CD4-positive, alpha-beta memory T cell (primary cell): ENCODE measurements at regions of chr22 and their contacts with region 1.

Region 1: DNA sequence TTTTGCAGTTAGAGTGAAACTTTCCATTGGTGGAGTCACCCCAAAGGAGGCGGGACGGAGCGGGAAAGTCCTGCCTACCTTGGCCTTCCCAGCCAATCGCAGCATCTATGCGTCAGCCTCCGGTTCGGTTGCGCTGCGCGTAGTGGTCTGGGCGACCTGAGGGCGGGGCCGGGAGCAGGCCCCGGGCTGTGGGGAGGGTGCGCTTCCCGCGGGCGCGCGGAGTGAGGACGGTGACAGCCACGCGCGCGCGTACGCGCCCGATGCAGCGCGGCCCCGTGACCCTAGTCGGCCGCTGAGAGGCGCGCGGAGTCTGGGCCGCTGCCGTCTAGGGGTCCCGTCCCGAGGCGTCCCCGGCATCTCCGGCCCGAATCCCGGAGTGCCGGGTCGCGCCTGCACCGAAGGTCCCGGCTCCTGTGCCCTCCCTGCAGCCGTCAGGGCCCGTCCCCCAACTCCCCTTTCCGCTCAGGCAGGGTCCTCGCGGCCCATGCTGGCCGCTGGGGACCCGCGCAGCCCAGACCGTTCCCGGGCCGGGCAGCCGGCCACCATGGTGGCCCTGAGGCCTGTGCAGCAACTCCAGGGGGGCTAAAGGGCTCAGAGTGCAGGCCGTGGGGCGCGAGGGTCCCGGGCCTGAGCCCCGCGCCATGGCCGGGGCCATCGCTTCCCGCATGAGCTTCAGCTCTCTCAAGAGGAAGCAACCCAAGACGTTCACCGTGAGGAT is at the start of gene NF2:
- DNase-seq: peak; percentile 98 to 99 (median 99)
- H3K4me3 ChIP-seq: peak within 1 kb of the TSS; percentile 79 to 88
- H3K4me3 Mint-ChIP-seq: peak within 1 kb of the TSS; percentile 90 to 99 (median 96)
- H3K27ac ChIP-seq: peak within 1 kb of the TSS; percentile 88
- H3K27ac Mint-ChIP-seq: peak within 1 kb of the TSS; percentile 80 to 98 (median 97)
- H3K4me1 ChIP-seq: peaks cover 21% of the 10 kb centered on the region
- H3K4me1 Mint-ChIP-seq: peaks cover 11 to 39% (median 21%) of the 10 kb centered on the region in 4 donors
- H3K27me3 ChIP-seq: no peaks in the 10 kb centered on the region
- H3K27me3 Mint-ChIP-seq: no peaks in the 10 kb centered on the region
- total RNA-seq, gene NF2: 28.3 to 31.4 TPM

Region 2: GRCh38 chr22:29443452-29443851 is 160.1 kb before region 1 on chr22:
- CTCF ChIA-PET with region 1: no interaction called
- POLR2A ChIA-PET with region 1: no interaction called
- intact Hi-C with region 1: no loop called
- DNase-seq: no peak
- H3K4me3 ChIP-seq: no peak overlapping the region
- H3K4me3 Mint-ChIP-seq: no peak overlapping the region
- H3K27ac ChIP-seq: no peak overlapping the region
- H3K27ac Mint-ChIP-seq: no peak overlapping the region
- H3K4me1 ChIP-seq: no peaks in the 10 kb centered on the region
- H3K4me1 Mint-ChIP-seq: no peaks in the 10 kb centered on the region
- H3K27me3 ChIP-seq: no peaks in the 10 kb centered on the region
- H3K27me3 Mint-ChIP-seq: peaks cover 4% of the 10 kb centered on the region in 2 donors

Region 3: DNA sequence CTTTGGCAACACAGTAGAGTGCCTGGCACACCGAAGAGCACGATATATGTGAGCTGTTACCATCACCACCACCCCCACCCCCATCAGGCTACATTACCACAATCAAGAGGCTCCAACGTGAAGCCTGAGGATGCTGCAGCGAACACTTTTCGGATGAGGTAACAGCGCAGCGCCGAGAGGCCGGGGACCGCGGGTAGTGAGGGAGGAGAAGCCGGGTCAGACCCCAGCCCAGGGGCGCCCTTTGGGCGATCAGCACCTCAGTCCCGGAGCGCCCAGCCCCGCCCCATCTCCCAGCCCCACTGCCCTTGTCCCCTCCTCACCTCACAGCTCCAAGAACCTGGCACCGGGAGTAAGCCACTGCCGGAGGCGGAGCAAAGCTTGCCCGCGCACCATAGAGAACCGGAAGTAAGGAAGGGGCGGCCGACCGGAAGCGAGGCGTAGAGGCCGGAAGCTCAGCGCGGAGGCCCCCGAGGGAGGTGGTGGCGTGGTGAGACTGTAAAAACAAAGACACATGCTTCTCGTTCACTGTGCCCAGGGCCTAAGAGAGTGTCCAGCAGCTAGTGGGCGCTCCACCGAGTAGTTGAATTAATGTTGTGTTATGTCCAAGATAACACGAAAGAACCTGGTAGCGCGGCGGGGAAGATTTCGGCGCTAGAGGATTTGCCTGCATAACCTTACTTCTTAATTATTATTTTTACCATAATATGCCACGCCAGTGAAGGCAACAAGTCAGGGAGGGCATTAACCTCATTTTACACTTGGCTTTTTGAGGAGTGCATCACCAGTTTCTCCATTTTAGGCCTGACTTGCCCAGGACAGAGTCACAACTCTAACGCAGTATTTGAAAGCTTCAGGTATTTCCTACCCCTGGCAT is 49.9 kb before region 1 on chr22 and contains the start of gene THOC5:
- CTCF ChIA-PET with region 1: interaction called, 3 read pairs
- POLR2A ChIA-PET with region 1: interaction called, 24 read pairs
- intact Hi-C with region 1: loop called (anchors 1 kb)
- DNase-seq: peak; percentile 86 to 91 (median 87)
- H3K4me3 ChIP-seq: peak within 1 kb of the TSS; percentile 69 to 95
- H3K4me3 Mint-ChIP-seq: peak within 1 kb of the TSS; percentile 92 to 99 (median 97)
- H3K27ac ChIP-seq: peak within 1 kb of the TSS; percentile 65
- H3K27ac Mint-ChIP-seq: peak within 1 kb of the TSS; percentile 87 to 99 (median 98)
- H3K4me1 ChIP-seq: peaks cover 8% of the 10 kb centered on the region
- H3K4me1 Mint-ChIP-seq: peaks cover 14 to 40% (median 27%) of the 10 kb centered on the region in 4 donors
- H3K27me3 ChIP-seq: no peaks in the 10 kb centered on the region
- H3K27me3 Mint-ChIP-seq: no peaks in the 10 kb centered on the region
- total RNA-seq, gene THOC5: 57.6 to 57.7 TPM

Region 4: GRCh38 chr22:29587938-29588699 is 15.4 kb before region 1 on chr22:
- CTCF ChIA-PET with region 1: interaction called, 19 read pairs
- POLR2A ChIA-PET with region 1: interaction called, 6 read pairs
- intact Hi-C with region 1: loop called (anchors 1 kb)
- DNase-seq: no peak
- H3K4me3 ChIP-seq: no peak overlapping the region
- H3K4me3 Mint-ChIP-seq: no peak overlapping the region
- H3K27ac ChIP-seq: no peak overlapping the region
- H3K27ac Mint-ChIP-seq: peak overlapping the region in 3 of 7 donors; percentile 18 to 60 (median 46)
- H3K4me1 ChIP-seq: peaks cover 8% of the 10 kb centered on the region
- H3K4me1 Mint-ChIP-seq: peaks cover 8 to 12% (median 10%) of the 10 kb centered on the region in 4 donors
- H3K27me3 ChIP-seq: no peaks in the 10 kb centered on the region
- H3K27me3 Mint-ChIP-seq: no peaks in the 10 kb centered on the region

Region 5: DNA sequence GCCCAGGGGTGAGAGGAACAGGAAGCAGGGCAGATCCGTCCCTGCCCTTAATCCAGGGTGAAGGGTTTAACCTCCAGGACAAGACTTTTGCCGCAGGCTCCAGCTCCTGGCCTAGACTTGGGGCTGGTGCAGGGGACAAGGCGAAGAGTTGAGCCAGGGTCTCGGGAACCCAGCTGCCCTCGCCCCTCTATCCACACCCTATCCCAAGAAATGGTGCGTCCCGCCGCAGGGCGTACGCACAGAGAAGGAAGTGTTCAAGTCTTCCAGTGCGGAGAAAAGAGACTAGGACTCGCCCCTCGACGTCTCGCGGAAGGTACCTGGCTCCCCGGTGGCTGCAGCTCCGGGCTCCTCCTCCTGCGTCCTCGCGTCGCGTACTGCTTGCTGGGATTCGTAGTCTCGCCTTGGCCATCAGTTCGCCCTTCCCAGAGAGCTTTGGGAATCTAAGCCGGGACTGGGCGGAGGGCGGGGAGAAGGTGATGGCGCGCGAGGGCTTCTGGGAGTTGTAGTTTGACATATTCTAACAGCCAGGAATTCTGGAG is 163.2 kb after region 1 on chr22 and contains the start of gene ZMAT5:
- CTCF ChIA-PET with region 1: no interaction called
- POLR2A ChIA-PET with region 1: interaction called, 4 read pairs
- intact Hi-C with region 1: loop called (anchors 1 kb)
- DNase-seq: peak; percentile 93 to 96 (median 95)
- H3K4me3 ChIP-seq: peak within 1 kb of the TSS; percentile 96 to 100
- H3K4me3 Mint-ChIP-seq: peak within 1 kb of the TSS; percentile 95 to 100 (median 99)
- H3K27ac ChIP-seq: peak within 1 kb of the TSS; percentile 87
- H3K27ac Mint-ChIP-seq: peak within 1 kb of the TSS; percentile 38 to 99 (median 99)
- H3K4me1 ChIP-seq: peaks cover 29% of the 10 kb centered on the region
- H3K4me1 Mint-ChIP-seq: peaks cover 22 to 53% (median 28%) of the 10 kb centered on the region in 4 donors
- H3K27me3 ChIP-seq: no peaks in the 10 kb centered on the region
- H3K27me3 Mint-ChIP-seq: no peaks in the 10 kb centered on the region
- total RNA-seq, gene ZMAT5: 16.3 to 20.4 TPM

Region 6: DNA sequence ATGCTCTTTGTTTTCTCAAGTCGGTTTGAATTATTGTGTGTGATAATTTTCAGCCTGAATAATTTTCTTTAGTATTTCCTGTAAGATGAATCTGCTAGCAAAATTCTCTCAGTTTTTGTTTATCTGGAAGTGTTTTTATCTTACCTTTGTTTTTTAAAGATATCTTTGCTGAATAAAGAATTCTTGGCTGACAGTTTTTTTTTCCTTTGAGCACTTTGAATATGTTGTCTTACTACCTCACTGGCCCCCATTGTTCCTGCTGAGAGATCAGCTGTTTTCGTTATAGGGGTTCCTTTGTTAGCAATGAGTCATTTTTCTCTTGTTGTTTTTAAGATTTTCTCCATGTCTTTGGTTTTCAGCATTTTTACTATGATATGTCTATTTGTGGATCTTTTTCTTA is 539.7 kb after region 1 on chr22:
- CTCF ChIA-PET with region 1: no interaction called
- POLR2A ChIA-PET with region 1: no interaction called
- intact Hi-C with region 1: no loop called
- DNase-seq: no peak
- H3K4me3 ChIP-seq: no peak overlapping the region
- H3K4me3 Mint-ChIP-seq: no peak overlapping the region
- H3K27ac ChIP-seq: no peak overlapping the region
- H3K27ac Mint-ChIP-seq: no peak overlapping the region
- H3K4me1 ChIP-seq: no peaks in the 10 kb centered on the region
- H3K4me1 Mint-ChIP-seq: no peaks in the 10 kb centered on the region
- H3K27me3 ChIP-seq: no peaks in the 10 kb centered on the region
- H3K27me3 Mint-ChIP-seq: no peaks in the 10 kb centered on the region

Region 7: GRCh38 chr22:30591588-30592359 is 988.3 kb after region 1 on chr22 and contains the start of gene PES1:
- CTCF ChIA-PET with region 1: no interaction called
- POLR2A ChIA-PET with region 1: no interaction called
- intact Hi-C with region 1: loop called (anchors 5 kb)
- DNase-seq: peak; percentile 96 to 98 (median 97)
- H3K4me3 ChIP-seq: peak within 1 kb of the TSS; percentile 50 to 99
- H3K4me3 Mint-ChIP-seq: no peak within 1 kb of the TSS
- H3K27ac ChIP-seq: peak within 1 kb of the TSS; percentile 78
- H3K27ac Mint-ChIP-seq: peak within 1 kb of the TSS in 1 of 7 donors; percentile 82
- H3K4me1 ChIP-seq: peaks cover 22% of the 10 kb centered on the region
- H3K4me1 Mint-ChIP-seq: peaks cover 0 to 10% (median 3%) of the 10 kb centered on the region in 4 donors
- H3K27me3 ChIP-seq: no peaks in the 10 kb centered on the region
- H3K27me3 Mint-ChIP-seq: peaks cover 3 to 7% of the 10 kb centered on the region in 2 donors
- total RNA-seq, gene PES1: 50.1 to 51.6 TPM